PC-3 (cell line): ENCODE measurements at regions of chr2 and their contacts with region 1.

Region 1: DNA sequence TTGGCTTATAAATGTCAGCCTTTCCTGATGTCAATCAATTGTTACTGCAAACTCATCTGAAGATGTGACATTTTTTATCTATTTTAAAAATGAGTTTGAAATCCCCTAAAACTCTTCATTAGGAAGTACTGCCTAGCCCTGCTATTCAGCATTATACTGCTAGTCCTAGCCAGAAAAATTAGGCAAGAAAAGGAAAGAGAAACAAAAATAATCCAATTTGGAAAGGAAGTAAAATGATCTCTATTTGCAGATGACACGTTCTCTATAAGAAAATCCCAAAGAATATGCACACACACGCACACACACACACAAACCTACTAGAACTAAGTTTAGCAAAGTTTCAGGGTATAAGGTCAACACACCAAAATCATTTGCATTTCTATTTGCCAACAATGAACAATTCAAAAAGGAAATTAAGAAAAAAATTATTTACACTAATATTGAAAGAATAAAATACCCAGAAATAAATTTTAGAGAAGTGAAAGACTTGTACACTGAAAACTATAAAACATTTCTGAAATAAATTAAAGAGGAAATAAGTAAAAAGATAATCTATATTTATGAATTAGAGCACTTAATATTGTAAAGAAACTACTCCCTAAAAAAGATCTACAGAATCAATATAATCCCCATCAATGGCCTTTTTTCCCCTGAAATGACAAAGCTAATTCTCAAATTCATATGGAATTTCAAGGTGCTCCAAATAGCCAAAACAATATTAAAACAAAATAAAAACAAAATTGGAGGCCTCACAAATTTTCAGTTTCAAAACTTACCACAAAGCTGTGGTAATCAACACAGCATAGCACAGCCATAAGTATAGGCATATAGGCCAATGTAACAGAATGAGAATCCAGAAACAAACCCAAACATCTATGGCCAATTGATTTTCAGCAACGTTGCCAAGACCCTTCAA is 433.7 kb upstream of the TRIB2 start:
- DNase-seq: no peak
- ATAC-seq: no peak
- H3K4me3 ChIP-seq: no peak overlapping the region
- H3K27ac ChIP-seq: no peak overlapping the region
- H3K4me1 ChIP-seq: peaks cover 36% of the 10 kb centered on the region
- H3K27me3 ChIP-seq: no peaks in the 10 kb centered on the region
- CTCF ChIP-seq: no peak

Region 2: DNA sequence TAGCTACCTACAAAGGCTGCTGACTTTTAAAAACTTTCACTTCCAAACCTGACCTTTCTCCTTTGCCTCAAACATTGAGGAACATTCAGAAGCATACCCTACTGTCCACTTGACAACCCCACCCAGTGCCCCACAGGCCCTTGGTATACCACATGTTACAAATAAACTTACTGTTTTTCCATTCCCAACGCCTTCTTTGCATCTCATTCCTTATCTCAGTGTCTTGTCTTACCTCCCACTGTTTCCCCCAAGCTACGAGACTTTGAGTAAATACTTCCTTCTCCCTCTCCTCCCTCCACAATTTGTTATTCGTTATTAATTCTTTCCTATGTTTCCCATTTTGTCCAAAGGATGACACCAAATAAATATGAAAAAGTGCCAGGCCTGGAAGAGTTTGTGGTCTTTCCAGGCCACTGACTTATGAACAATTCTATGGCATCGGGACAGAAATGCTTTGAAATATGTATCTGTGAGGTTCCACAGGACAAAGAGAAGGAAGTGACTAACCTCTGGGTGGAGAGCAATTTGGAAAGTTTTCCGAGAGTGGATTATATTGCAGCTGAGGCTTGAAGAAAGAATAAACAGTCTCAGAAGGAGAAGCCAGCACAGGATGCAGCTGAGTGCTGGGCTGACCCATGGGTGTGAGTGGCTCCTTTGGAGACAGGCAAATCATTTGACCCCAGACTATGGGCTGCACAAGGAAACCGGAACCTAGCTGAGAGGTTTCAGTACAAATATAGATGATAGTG is 127.6 kb before region 1 on chr2:
- CTCF ChIA-PET with region 1: no interaction called
- POLR2A ChIA-PET with region 1: no interaction called
- intact Hi-C with region 1: loop called (anchors 1 kb)
- DNase-seq: peak; percentile 97
- ATAC-seq: peak; percentile 99
- H3K4me3 ChIP-seq: no peak overlapping the region
- H3K27ac ChIP-seq: peak overlapping the region; percentile 66
- H3K4me1 ChIP-seq: peaks cover 20% of the 10 kb centered on the region
- H3K27me3 ChIP-seq: no peaks in the 10 kb centered on the region
- CTCF ChIP-seq: no peak

Region 3: DNA sequence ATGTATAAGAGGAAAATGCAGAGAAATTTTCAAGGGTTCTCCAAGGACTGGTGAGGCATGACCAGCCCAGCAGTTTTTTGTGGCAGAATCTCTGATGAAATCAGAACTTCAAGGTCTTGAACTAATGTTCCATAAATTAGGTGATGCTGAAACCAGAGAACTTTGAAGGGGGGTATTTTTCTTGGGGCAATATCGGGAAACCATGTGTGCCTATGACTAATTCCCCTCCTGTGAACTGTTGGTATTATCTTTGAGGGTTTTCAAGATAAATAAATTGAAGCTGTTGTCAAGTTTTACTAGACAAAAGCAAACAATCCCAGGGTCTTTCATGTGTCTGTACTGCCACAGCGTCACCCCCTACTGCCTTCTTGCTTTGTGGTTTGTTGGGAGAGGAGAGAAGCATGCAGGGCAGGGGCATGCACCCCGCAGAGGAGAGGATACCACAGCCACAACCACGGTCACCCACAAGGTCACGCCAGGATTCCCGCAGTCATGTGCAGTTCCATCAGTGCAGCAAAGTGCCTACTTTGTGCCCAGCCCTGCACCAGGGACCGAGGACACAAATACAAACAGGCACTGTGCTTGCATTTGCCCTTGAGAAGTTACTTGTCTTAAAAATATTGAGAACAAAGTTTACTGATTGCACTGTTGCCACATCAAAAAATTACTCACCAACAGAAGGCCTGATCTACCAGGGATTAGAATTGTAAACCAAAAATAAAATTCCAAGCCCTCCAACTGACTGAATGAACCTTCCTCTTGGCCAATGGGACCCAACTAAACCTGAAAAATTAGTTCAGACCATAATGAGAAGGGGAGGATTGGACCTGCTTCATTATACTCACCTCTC is 20.4 kb after region 1 on chr2:
- CTCF ChIA-PET with region 1: no interaction called
- POLR2A ChIA-PET with region 1: no interaction called
- intact Hi-C with region 1: loop called (anchors 2 kb)
- DNase-seq: peak; percentile 87
- ATAC-seq: peak; percentile 80
- H3K4me3 ChIP-seq: no peak overlapping the region
- H3K27ac ChIP-seq: peak overlapping the region; percentile 78
- H3K4me1 ChIP-seq: peaks cover 41% of the 10 kb centered on the region
- H3K27me3 ChIP-seq: no peaks in the 10 kb centered on the region
- CTCF ChIP-seq: no peak

Region 4: DNA sequence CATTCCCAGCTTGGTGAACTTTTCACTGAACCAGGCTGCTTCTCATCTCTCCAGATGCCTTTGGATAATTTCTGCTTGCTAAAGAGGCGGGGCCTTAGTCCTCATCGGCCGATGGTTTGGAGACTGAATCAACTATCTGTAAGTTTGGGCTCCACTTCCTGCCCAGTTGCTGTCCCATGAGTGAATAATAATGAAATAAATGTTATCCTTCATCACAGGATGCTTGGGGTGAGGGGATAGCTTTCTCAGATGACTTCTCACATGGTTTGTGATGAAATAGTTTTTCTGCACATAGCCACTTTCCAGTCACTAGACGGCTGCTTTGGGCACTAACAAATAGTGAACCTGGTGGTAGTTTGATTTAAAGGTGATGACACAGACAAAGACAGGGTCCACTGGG is 57.1 kb after region 1 on chr2:
- CTCF ChIA-PET with region 1: no interaction called
- POLR2A ChIA-PET with region 1: no interaction called
- intact Hi-C with region 1: no loop called
- DNase-seq: no peak
- ATAC-seq: no peak
- H3K4me3 ChIP-seq: no peak overlapping the region
- H3K27ac ChIP-seq: no peak overlapping the region
- H3K4me1 ChIP-seq: peaks cover 9% of the 10 kb centered on the region; the same call in 1 of the 2 replicates
- H3K27me3 ChIP-seq: no peaks in the 10 kb centered on the region
- CTCF ChIP-seq: no peak